GM10248 (cell line): ENCODE measurements at regions of chr11 and their contacts with region 1.

Region 1: DNA sequence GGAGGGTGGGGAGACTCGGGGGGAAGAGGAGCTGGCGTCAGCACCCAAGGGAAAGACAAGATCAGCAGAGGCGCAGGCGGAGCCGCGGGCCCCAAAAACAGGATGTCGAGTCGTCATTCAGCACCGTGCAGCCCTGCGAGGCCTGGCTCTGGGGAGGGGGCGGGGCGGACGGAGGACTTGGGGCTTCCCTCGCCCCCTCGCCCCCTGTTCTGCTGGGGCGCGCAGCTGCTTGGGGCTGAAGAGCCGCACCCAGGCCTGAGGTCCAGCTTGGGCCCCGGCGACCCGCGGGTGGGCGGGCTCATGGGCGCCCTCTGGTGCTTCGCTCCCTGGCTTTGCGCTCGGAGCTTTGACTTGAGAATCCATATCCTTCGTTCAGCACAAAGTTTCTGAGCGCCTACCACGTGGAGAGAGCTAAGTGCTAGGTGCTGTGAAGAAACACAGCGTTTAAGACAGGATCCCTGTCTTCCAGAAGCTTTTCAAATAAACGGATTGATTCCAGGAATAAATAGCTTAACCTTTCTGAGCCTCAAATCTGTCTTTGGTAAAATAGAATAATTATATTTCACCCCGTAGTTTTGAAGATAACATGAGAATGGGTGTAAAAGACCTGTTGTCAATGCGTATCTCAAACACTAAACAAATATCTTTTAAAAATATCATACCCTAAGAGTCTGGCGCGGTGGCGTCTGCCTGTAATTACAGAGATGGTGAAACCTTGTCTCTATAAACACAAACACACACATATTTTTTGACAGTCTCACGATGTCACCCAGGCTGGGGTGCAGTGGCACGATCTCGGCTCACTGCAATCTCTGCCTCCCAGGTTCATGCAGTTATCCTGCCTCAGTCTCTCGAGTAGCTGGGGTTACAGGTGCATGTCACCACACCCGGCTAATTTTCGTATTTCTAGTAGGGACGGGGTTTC is 929 bp upstream of the RHOG start:
- DNase-seq: peak; percentile 87
- CTCF ChIP-seq: peak; percentile 87

Region 2: GRCh38 chr11:3824714-3825472 is 16.8 kb before region 1 on chr11:
- CTCF ChIA-PET with region 1: interaction called, 32 read pairs
- POLR2A ChIA-PET with region 1: interaction called, 5 read pairs
- DNase-seq: peak; percentile 83
- CTCF ChIP-seq: peak; percentile 71

Region 3: DNA sequence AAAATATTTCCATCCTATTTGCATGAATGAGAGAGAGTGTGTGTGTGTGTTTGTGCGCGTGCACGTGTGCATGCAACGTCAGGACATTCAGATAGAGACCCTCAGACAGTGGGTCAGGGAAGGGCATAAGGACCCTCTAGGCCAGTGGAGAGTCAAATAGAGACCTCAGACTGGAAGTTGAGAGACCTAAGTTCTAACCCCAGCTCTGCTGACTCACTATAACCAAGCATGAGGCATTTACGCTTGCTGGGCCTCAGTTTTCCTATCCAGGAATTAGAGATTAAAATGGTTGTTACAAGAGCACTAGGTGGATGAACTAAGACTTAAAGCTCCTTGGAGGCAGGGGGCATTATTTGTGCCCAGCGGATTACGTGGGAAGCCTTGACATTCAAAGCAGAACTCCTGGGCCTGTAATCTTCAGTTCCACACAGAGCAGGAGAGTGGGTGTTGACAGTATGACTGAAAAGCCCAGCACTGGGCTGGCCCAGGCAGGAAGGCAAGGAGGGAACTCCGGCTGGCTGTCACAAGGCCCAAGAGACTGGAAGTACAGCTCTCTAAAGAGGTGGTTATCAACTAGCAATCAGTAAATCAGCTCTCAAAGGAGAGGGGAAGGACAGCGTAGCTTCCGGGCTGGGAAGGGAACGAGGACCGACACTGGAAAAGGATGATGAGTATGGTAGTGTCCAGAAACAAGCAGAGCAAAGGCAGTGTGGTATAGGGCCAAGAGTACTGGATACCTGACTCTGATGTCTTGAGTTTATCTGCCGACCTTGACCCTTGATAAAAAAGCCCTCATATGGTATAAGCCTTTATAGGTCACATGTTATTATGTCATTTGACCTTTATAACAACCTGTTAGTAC is 10.1 kb before region 1 on chr11:
- CTCF ChIA-PET with region 1: interaction called, 329 read pairs
- POLR2A ChIA-PET with region 1: interaction called, 4 read pairs
- DNase-seq: no peak
- CTCF ChIP-seq: no peak

Region 4: DNA sequence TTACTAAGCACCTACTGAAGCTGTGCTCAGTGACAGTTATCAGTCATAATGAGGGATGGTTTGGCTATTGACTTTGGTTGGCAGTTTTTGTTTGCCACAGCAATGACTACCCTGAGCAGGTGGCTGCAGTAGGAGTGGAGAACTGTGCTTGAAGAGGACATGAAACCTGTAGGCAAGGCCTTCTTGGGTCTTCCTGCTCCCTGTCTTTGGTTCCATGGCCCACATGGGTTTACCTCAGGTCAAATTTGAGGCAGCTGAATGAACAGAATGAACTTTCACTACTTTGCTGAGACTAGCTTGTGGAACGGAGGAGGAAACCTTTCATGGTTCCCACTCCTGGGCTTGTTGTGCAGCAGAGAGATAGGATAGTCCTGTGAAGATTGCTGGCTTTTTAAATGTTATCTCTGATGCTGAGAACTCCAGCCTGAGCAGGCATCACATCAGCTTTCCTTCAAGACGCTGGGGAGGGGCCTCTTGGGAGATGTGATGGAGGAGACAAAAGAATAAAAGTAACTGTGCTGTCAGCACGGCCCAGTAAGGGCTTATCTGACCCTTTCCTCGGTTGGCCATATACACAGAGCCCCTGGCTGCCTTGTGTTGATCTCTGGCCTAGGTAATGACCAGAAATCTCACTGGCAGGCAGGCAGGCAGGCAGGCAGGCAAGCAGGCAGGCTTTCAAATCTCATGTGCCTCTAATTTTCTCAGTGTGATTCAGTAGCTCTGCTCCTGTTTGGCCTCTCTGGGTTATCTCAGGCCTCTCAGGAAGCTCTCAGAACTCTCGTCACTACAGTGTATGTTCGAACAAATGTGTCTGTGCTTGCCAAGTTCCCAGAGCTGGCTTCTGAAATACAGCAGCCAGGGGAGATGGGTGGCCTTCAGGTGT is 25.8 kb after region 1 on chr11:
- CTCF ChIA-PET with region 1: interaction called, 422 read pairs
- POLR2A ChIA-PET with region 1: interaction called, 3 read pairs
- DNase-seq: no peak
- CTCF ChIP-seq: no peak

Region 5: DNA sequence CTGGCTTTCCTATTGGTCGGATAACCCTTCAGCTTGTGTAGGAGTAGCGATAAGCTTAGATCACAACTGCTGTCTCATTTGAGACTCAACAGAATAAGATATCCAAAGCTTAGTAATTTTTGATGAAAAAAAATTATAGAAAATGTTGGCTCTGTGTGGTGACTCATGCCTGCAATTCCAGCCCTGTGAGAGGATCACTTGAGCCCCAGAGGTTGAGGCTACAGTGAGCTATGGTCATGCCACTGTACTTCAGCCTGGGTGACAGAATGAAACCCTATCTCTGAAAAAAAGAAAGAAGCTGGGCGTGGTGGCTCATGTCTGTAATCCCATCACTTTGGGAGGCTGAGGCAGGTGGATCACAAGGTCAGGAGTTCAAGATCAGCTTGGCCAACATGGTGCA is 197.3 kb after region 1 on chr11:
- CTCF ChIA-PET with region 1: interaction called, 10 read pairs
- POLR2A ChIA-PET with region 1: no interaction called
- DNase-seq: no peak
- CTCF ChIP-seq: no peak